ENCODE measurements at regions of chr6 and their contacts with region 1.

Region 1: GRCh38 chr6:80214436-80215022 is 108.1 kb downstream of the BCKDHB start:
- DNase-seq: peak; percentile 60
- H3K4me3 Mint-ChIP-seq: no peak overlapping the region
- H3K27ac Mint-ChIP-seq: no peak overlapping the region
- H3K4me1 Mint-ChIP-seq: peaks cover 4% of the 10 kb centered on the region
- H3K27me3 Mint-ChIP-seq: no peaks in the 10 kb centered on the region

Region 2: DNA sequence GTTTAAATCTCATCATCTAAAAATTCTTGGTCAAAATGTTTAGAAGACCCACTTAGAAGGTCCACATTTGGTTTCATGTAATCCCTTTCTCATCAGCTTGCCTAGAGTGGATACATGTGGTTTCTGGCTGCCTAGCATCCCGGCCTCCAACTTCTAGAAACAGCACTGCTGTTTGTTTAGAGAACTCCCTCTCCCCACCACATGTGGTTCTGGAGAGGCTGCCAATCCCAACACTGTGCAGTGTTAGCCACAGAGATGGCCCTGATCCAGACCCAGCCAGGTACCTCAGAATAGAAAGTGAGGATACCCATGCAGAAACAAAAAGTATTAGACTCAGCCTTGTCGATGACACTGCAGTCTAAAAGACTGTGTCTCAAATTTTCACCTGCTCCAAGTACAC is 133.7 kb after region 1 on chr6:
- intact Hi-C with region 1: loop called (anchors 10 kb)
- DNase-seq: no peak
- H3K4me3 Mint-ChIP-seq: no peak overlapping the region
- H3K27ac Mint-ChIP-seq: no peak overlapping the region
- H3K4me1 Mint-ChIP-seq: no peaks in the 10 kb centered on the region
- H3K27me3 Mint-ChIP-seq: peaks cover 1% of the 10 kb centered on the region